ENCODE measurements at regions of chrX and their contacts with region 1.

Region 1: DNA sequence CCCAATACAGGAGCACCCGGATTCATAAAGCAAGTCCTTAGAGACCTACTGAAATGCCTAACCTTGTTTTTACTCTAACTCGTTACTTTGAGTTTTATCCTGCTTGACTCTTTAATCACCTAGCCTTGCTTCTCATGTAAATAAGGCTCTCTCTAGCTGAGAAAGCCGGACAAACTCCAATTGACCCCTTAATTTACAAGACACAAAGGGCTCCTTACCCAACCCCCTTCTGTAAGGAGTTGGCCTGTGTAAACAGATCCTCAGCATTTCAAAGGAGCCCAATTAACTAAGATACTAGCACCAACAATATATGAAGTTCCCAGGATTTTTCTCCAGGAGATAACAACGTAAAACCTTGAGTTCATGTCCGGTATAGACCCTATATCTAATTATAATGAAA is 61.7 kb downstream of the CT47B1 start:
- DNase-seq: no peak
- ATAC-seq: no peak
- H3K4me3 ChIP-seq: no peak overlapping the region
- H3K27ac ChIP-seq: no peak overlapping the region
- H3K4me1 ChIP-seq: no peaks in the 10 kb centered on the region
- H3K27me3 ChIP-seq: no peaks in the 10 kb centered on the region
- CTCF ChIP-seq: no peak

Region 2: GRCh38 chrX:120874678-120875557 is 60.9 kb after region 1 on chrX:
- intact Hi-C with region 1: no loop called
- DNase-seq: no peak
- ATAC-seq: no peak
- H3K4me3 ChIP-seq: no peak overlapping the region
- H3K27ac ChIP-seq: no peak overlapping the region
- H3K4me1 ChIP-seq: no peaks in the 10 kb centered on the region
- H3K27me3 ChIP-seq: no peaks in the 10 kb centered on the region
- CTCF ChIP-seq: no peak

Region 3: GRCh38 chrX:121236040-121236439 is 422.1 kb after region 1 on chrX:
- intact Hi-C with region 1: loop called in 1 of 10 experiments (anchors 5 kb)
- DNase-seq: no peak
- ATAC-seq: no peak
- H3K4me3 ChIP-seq: no peak overlapping the region
- H3K27ac ChIP-seq: no peak overlapping the region
- H3K4me1 ChIP-seq: no peaks in the 10 kb centered on the region
- H3K27me3 ChIP-seq: no peaks in the 10 kb centered on the region
- CTCF ChIP-seq: no peak